Esophagus muscularis mucosa (tissue), 4 donors: ENCODE measurements at regions of chrX and their contacts with region 1.

Region 1: GRCh38 chrX:114611018-114611619 is 27.2 kb downstream of the HTR2C start:
- DNase-seq: no peak
- H3K4me3 ChIP-seq: no peak overlapping the region
- H3K27ac ChIP-seq: no peak overlapping the region
- H3K4me1 ChIP-seq: no peaks in the 10 kb centered on the region
- H3K27me3 ChIP-seq: no peaks in the 10 kb centered on the region
- CTCF ChIP-seq: peak; percentile 64 to 83 (median 76)
- EP300 ChIP-seq: no peak
- POLR2A ChIP-seq: no peak

Region 2: GRCh38 chrX:115147220-115147619 is 536.1 kb after region 1 on chrX:
- intact Hi-C with region 1: loop called (anchors 10 kb)
- DNase-seq: no peak
- H3K4me3 ChIP-seq: no peak overlapping the region
- H3K27ac ChIP-seq: no peak overlapping the region
- H3K4me1 ChIP-seq: peaks cover 0 to 5% (median 0%) of the 10 kb centered on the region in 4 donors
- H3K27me3 ChIP-seq: no peaks in the 10 kb centered on the region
- CTCF ChIP-seq: peak; percentile 37 to 55 (median 49)
- EP300 ChIP-seq: no peak
- POLR2A ChIP-seq: no peak